Dorsolateral prefrontal cortex (tissue), 120 donors: ENCODE measurements at regions of chr6 and their contacts with region 1.

Region 1: DNA sequence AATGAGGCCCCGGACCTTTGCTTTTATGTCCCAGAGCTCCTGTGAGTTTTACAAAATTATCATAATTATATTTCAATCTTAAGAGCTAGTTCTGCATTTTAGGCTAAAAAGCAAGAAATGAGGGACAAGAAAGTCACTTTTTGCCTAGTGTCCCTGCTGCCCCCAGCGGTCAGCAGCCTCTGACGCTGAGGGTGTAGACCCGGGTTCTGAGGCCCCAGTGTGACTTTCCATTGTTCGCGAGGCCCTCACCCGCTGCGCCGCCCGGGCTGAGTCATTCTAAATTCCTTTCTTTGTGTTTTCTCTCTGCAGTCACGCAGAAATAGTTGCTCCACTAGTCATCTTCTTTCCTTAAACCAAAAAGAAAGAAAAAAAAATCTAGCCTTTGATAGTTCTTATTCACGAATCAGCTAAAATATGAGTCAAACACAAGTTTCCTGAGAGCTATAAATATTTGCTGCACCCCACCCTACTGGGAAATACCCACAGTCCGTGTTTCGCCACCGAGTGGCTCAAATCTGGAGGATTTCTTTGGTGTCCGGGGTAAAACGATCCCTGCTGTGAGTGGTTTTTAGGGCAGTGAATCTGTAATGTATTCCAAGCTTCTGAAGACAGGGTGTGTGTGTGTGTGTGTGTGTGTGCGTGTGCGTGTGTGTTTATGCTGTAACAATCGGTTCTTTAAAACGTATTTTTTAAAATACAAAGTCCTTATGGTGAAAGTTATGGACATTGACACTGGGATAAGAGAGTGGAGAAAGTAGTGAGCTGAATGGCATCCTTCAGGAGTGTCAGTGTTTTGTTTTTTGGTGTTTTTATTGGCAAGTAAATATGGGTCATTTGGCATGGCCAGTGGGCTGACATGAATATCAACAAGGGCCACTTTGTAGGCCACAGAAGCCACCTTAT is 59.7 kb upstream of the EEF1A1 start:
- DNase-seq: peak; percentile 17 to 89 (median 82)
- H3K4me3 ChIP-seq: peak overlapping the region in 58 of 59 donors; percentile 24 to 70 (median 46)
- H3K27ac ChIP-seq: peak overlapping the region; percentile 84 to 100 (median 96)
- H3K27me3 ChIP-seq: no peaks in the 10 kb centered on the region
- CTCF ChIP-seq: peak in 54 of 56 donors; percentile 29 to 78 (median 56)

Region 2: DNA sequence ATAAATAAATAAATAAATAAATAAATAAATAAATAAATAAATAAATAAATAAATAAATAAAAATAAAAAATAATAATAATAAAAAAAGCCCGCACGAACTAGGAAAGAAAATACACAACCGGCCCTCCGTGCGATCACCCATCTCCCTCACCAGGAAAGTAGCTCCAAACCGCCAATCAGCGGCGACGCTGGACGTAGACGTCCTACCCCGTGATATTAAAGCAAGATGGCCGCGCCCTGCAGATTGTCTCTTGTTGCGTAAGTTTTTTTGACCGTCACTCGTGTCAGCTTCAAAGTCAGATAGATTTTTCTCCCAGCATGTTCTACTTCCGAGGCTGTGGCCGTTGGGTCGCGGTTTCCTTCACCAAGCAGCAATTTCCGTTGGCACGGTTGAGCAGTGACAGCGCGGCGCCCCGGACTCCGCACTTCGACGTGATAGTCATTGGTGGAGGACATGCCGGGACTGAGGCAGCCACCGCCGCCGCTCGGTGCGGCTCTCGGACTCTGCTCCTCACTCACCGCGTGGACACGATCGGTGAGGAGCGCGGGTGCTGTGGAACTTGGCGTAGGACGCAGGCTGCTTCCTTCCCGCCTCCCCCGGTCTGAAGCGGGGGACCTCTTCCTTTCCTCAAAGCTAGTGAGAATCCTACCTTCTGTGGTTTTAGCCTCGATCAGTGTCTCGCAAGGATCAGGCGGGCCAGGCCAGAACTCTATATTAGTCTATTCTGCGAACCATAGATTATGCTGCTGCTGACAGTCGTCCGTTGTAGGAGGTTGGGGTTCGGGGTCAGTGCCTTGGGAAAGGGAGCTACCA is 118.8 kb before region 1 on chr6 and contains the start of gene MTO1:
- intact Hi-C with region 1: loop called in 1 of 2 experiments (anchors 10 kb)
- DNase-seq: peak; percentile 77 to 95 (median 90)
- H3K4me3 ChIP-seq: peak within 1 kb of the TSS; percentile 71 to 100 (median 95)
- H3K27ac ChIP-seq: peak within 1 kb of the TSS; percentile 74 to 99 (median 95)
- H3K27me3 ChIP-seq: no peaks in the 10 kb centered on the region
- CTCF ChIP-seq: peak in 21 of 56 donors; percentile 3 to 54 (median 25)
- total RNA-seq, gene MTO1: 25.5 to 56.6 (median 37.6) TPM

Region 3: GRCh38 chr6:73537677-73538076 is 42.8 kb before region 1 on chr6:
- intact Hi-C with region 1: no loop called
- DNase-seq: no peak
- H3K4me3 ChIP-seq: no peak overlapping the region
- H3K27ac ChIP-seq: no peak overlapping the region
- H3K27me3 ChIP-seq: no peaks in the 10 kb centered on the region
- CTCF ChIP-seq: no peak

Region 4: DNA sequence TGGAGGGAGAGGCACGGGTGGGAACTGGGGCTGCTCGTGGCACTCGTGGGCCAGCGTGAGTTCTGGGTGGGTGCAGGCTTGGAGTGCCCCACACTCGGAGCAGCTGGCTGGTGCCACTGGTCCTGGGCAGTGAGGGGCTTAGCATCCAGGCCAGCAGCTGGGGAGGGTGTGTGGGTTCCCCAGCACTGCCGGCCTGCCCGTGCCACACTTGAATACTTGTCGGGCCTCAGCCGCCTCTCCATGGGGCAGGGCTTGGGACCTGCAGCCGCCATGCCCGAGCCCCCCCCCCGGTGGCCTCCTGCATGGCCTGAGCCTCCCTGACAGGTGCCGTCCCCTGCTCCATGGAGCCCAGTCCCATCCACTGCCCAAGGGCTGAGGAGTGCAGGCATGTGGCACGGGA is 322.7 kb after region 1 on chr6:
- intact Hi-C with region 1: no loop called
- DNase-seq: no peak
- H3K4me3 ChIP-seq: no peak overlapping the region
- H3K27ac ChIP-seq: no peak overlapping the region
- H3K27me3 ChIP-seq: peaks cover 0 to 5% (median 0%) of the 10 kb centered on the region in 45 donors
- CTCF ChIP-seq: no peak